Activated naive CD4-positive, alpha-beta T cell treated with anti-CD3 and anti-CD28 coated beads, Interleukin-2, amount 10 ng/mL, durations not matched to agents 7 days and 5 days (primary cell): ENCODE measurements at regions of chr17 and their contacts with region 1.

Region 1: GRCh38 chr17:28763804-28764266 is 20.0 kb downstream of the TRAF4 start:
- DNase-seq: peak; percentile 87
- H3K4me3 Mint-ChIP-seq: no peak overlapping the region
- H3K27ac Mint-ChIP-seq: peak overlapping the region; percentile 34
- H3K4me1 Mint-ChIP-seq: peaks cover 12% of the 10 kb centered on the region
- H3K27me3 Mint-ChIP-seq: no peaks in the 10 kb centered on the region

Region 2: GRCh38 chr17:28726226-28727130 is 37.4 kb before region 1 on chr17 and contains the start of gene TLCD1:
- CTCF ChIA-PET with region 1: interaction called, 52 read pairs
- DNase-seq: peak; percentile 94
- H3K4me3 Mint-ChIP-seq: peak within 1 kb of the TSS; percentile 94
- H3K27ac Mint-ChIP-seq: peak within 1 kb of the TSS; percentile 100
- H3K4me1 Mint-ChIP-seq: peaks cover 72% of the 10 kb centered on the region
- H3K27me3 Mint-ChIP-seq: no peaks in the 10 kb centered on the region

Region 3: GRCh38 chr17:28750178-28751047 is 13.4 kb before region 1 on chr17:
- CTCF ChIA-PET with region 1: interaction called, 58 read pairs
- DNase-seq: peak; percentile 94
- H3K4me3 Mint-ChIP-seq: no peak overlapping the region
- H3K27ac Mint-ChIP-seq: peak overlapping the region; percentile 55
- H3K4me1 Mint-ChIP-seq: peaks cover 38% of the 10 kb centered on the region
- H3K27me3 Mint-ChIP-seq: no peaks in the 10 kb centered on the region

Region 4: GRCh38 chr17:28842282-28843012 is 78.6 kb after region 1 on chr17 and contains the start of gene FAM222B:
- CTCF ChIA-PET with region 1: interaction called, 12 read pairs
- DNase-seq: peak; percentile 90
- H3K4me3 Mint-ChIP-seq: peak within 1 kb of the TSS; percentile 98
- H3K27ac Mint-ChIP-seq: peak within 1 kb of the TSS; percentile 90
- H3K4me1 Mint-ChIP-seq: peaks cover 32% of the 10 kb centered on the region
- H3K27me3 Mint-ChIP-seq: no peaks in the 10 kb centered on the region

Region 5: DNA sequence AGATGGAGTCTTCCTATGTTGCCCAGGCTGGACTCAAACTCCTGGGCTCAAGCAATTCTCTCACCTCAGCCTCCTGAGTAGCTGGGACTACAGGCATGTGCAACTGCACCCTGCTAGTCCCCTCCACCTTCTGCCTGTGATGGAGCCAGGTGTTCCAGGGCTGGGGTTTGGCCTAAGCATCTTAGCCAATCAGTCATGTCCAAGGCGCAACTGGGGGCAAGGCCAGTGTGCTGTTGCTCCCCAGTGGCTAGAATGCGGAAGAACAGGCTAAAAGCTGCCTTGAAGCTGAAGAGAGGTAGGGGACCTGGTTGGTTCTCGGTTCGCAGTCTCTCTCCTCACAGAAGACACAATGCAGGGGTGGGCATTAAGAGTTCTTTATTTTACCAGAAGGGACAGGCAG is 115.1 kb after region 1 on chr17:
- CTCF ChIA-PET with region 1: interaction called, 22 read pairs
- DNase-seq: peak; percentile 34
- H3K4me3 Mint-ChIP-seq: no peak overlapping the region
- H3K27ac Mint-ChIP-seq: no peak overlapping the region
- H3K4me1 Mint-ChIP-seq: no peaks in the 10 kb centered on the region
- H3K27me3 Mint-ChIP-seq: no peaks in the 10 kb centered on the region

Region 6: GRCh38 chr17:28902819-28903545 is 139.1 kb after region 1 on chr17 and contains the start of gene DHRS13:
- CTCF ChIA-PET with region 1: interaction called, 47 read pairs
- DNase-seq: peak; percentile 95
- H3K4me3 Mint-ChIP-seq: peak within 1 kb of the TSS; percentile 93
- H3K27ac Mint-ChIP-seq: peak within 1 kb of the TSS; percentile 94
- H3K4me1 Mint-ChIP-seq: peaks cover 47% of the 10 kb centered on the region
- H3K27me3 Mint-ChIP-seq: no peaks in the 10 kb centered on the region

Region 7: GRCh38 chr17:28916302-28916934 is 152.6 kb after region 1 on chr17:
- CTCF ChIA-PET with region 1: interaction called, 41 read pairs
- DNase-seq: peak; percentile 67
- H3K4me3 Mint-ChIP-seq: no peak overlapping the region
- H3K27ac Mint-ChIP-seq: peak overlapping the region; percentile 13
- H3K4me1 Mint-ChIP-seq: no peaks in the 10 kb centered on the region
- H3K27me3 Mint-ChIP-seq: no peaks in the 10 kb centered on the region